ENCODE measurements at regions of chr2 and their contacts with region 1.

Region 1: GRCh38 chr2:102615622-102616436 is 3.5 kb upstream of the SLC9A2 start:
- DNase-seq: peak; percentile 29 to 78
- ATAC-seq: peak; percentile 63 to 67 (median 65)
- H3K4me3 ChIP-seq: no peak overlapping the region
- H3K27ac ChIP-seq: no peak overlapping the region
- H3K4me1 ChIP-seq: no peaks in the 10 kb centered on the region
- H3K27me3 ChIP-seq: peaks cover 0 to 2% (median 0%) of the 10 kb centered on the region in 3 donors
- CTCF ChIP-seq: peak; percentile 94

Region 2: DNA sequence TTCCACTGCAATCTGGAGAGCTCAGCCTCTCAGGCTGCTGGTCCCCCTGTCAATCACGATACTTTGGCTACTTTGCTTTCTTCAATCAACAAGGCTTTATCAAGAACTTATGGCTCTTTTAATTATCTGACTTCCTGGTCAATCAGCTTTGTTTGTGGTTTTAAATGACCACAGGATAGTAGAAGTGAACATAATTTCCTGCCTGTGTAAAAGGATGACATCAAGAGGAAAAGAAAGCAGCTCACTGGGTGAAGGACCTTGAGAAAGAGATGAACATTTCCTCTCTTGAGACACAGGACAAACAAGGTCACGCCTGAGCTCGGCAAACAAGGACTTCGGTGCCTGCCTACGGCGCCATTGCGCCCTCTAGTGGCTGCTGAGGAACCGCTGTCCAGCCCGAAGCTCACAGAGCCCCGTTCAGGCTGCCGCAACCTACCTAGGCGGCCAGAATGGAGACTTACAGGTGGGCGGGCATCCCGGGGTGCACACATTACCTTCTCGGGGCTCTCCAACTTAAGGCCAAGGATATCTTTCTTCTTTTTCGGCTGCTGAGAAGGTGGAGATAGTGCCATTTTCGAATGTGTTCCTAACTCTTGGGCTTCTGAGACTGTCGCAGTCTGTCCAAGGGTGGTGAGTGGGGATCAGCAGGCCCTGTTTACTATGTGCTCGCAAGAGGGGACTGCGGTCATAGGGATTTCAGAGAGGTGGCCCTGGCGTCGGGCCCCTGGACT is 375.0 kb before region 1 on chr2:
- intact Hi-C with region 1: no loop called
- DNase-seq: peak; percentile 90 to 96
- ATAC-seq: peak; percentile 96 to 99 (median 98)
- H3K4me3 ChIP-seq: no peak overlapping the region
- H3K27ac ChIP-seq: peak overlapping the region; percentile 41
- H3K4me1 ChIP-seq: no peaks in the 10 kb centered on the region
- H3K27me3 ChIP-seq: no peaks in the 10 kb centered on the region
- CTCF ChIP-seq: peak; percentile 99

Region 3: GRCh38 chr2:102677244-102678215 is 61.7 kb after region 1 on chr2:
- intact Hi-C with region 1: no loop called
- DNase-seq: no peak
- ATAC-seq: no peak
- H3K4me3 ChIP-seq: no peak overlapping the region
- H3K27ac ChIP-seq: no peak overlapping the region
- H3K4me1 ChIP-seq: no peaks in the 10 kb centered on the region
- H3K27me3 ChIP-seq: no peaks in the 10 kb centered on the region
- CTCF ChIP-seq: no peak

Region 4: GRCh38 chr2:102703748-102704147 is 87.9 kb after region 1 on chr2:
- intact Hi-C with region 1: loop called in 1 of 2 experiments (anchors 10 kb)
- DNase-seq: no peak
- ATAC-seq: peak; percentile 62 to 93 (median 76)
- H3K4me3 ChIP-seq: no peak overlapping the region
- H3K27ac ChIP-seq: no peak overlapping the region
- H3K4me1 ChIP-seq: no peaks in the 10 kb centered on the region
- H3K27me3 ChIP-seq: no peaks in the 10 kb centered on the region
- CTCF ChIP-seq: peak; percentile 52

Region 5: GRCh38 chr2:103459291-103459690 is 843.5 kb after region 1 on chr2:
- intact Hi-C with region 1: no loop called
- DNase-seq: no peak
- ATAC-seq: no peak
- H3K4me3 ChIP-seq: no peak overlapping the region
- H3K27ac ChIP-seq: no peak overlapping the region
- H3K4me1 ChIP-seq: no peaks in the 10 kb centered on the region
- H3K27me3 ChIP-seq: no peaks in the 10 kb centered on the region
- CTCF ChIP-seq: no peak